Activated CD8-positive, alpha-beta memory T cell treated with anti-CD3 and anti-CD28 coated beads, Interleukin-2, amount 10 ng/mL, durations not matched to agents 7 days and 5 days (primary cell): ENCODE measurements at regions of chr11 and their contacts with region 1.

Region 1: GRCh38 chr11:132278801-132279574 is 908.6 kb downstream of the NTM start:
- DNase-seq: no peak
- ATAC-seq: no peak
- H3K4me3 Mint-ChIP-seq: no peak overlapping the region
- H3K27ac Mint-ChIP-seq: no peak overlapping the region
- H3K4me1 Mint-ChIP-seq: peaks cover 2% of the 10 kb centered on the region
- H3K27me3 Mint-ChIP-seq: peaks cover 7% of the 10 kb centered on the region

Region 2: DNA sequence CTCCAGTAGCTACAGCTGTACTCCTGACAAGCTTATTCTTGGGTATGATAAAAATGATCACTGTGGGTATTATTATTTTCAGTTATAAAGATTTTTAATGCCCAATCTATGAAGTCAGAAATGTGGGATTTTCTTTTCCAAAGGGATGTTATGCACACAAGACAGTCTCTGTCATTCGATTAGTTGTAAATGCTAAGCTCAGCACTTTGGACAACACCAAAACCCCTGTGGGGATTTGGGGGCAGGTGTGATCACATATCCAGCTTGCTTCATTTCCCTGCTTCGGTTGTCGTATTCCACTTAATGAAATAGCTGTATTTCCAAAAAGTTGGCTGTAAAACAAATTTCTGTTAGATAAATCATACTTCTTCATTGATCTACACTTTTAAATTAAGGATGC is 22.9 kb after region 1 on chr11:
- CTCF ChIA-PET with region 1: no interaction called
- DNase-seq: no peak
- ATAC-seq: no peak
- H3K4me3 Mint-ChIP-seq: no peak overlapping the region
- H3K27ac Mint-ChIP-seq: no peak overlapping the region
- H3K4me1 Mint-ChIP-seq: peaks cover 3% of the 10 kb centered on the region
- H3K27me3 Mint-ChIP-seq: no peaks in the 10 kb centered on the region

Region 3: DNA sequence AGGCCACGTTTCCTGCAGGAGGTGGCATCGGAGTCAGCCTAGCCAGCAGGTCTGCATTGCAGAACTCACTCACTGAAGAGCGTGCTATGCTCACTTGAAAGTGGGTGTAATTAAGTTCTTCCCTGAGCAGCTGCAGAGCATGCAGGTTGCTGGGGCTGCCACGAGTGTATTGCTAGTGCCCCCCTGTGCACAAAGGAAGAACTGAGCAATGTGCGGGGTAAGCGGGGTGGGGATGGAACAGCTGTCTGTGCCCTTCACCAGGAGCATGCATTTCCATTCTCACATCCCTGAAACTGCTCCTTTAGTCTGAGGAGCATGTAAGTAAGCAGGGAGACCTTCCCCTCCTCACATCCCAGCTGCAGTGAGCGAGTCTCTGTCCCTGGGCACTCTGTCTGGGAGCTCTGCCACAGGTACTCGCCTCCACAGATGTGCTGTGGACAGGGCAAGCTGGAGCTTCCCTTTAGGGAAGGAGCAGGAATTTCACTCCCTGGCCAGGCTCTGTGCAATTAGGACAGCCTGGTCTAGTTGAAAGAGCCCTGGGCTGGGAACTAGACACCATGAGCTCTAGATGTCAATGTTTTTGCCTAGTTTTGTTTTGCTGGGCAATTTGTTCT is 123.2 kb after region 1 on chr11:
- CTCF ChIA-PET with region 1: interaction called, 26 read pairs
- DNase-seq: peak; percentile 68
- ATAC-seq: peak; percentile 87
- H3K4me3 Mint-ChIP-seq: no peak overlapping the region
- H3K27ac Mint-ChIP-seq: no peak overlapping the region
- H3K4me1 Mint-ChIP-seq: peaks cover 3% of the 10 kb centered on the region
- H3K27me3 Mint-ChIP-seq: peaks cover 10% of the 10 kb centered on the region